ENCODE measurements at regions of chr4 and their contacts with region 1.

Region 1: DNA sequence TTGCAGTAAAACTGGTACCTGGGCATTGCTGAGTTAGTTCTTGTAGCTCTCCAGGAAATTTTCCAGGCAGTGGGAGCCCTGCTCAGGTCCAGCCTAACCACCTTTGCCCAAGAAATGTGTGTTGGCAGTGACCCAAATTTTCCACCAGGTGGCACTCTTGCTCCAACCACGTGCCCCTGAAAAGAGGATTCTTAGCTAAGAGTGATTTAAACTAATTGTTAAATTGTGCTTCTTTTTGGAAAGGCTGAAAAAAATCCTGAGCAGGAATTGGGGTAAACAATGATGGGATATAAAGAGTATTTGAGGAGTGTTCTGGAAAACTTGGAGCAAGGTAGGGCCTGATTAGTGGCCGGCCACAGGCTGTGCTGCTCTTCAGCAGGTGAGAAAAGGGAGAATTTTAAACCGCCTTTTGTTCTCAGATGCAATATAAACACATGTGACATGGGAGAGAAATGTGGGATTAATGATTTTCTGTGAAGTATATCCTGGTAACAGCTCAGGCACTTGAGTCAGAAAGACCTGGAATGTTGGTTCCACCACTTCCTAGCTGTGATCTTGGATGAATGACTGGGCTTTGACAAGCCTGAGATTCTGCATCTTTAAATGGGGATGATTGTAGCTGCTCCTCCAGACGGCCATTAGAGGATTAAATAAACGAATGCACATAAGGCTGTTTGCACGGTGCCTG is 219.6 kb downstream of the PTTG2 start:
- DNase-seq: no peak
- ATAC-seq: peak; percentile 83
- H3K4me3 ChIP-seq: no peak overlapping the region
- H3K27ac ChIP-seq: 0 out of 2 replicates have a peak overlapping the region, but pooled peaks have one; percentile 6
- H3K4me1 ChIP-seq: peaks cover 15 to 18% of the 10 kb centered on the region in 2 experiments
- H3K27me3 ChIP-seq: no peaks in the 10 kb centered on the region
- CTCF ChIP-seq: peak; percentile 86 to 99 (median 96)
- POLR2A ChIP-seq: no peak
- RAD21 ChIP-seq: peak; percentile 99

Region 2: DNA sequence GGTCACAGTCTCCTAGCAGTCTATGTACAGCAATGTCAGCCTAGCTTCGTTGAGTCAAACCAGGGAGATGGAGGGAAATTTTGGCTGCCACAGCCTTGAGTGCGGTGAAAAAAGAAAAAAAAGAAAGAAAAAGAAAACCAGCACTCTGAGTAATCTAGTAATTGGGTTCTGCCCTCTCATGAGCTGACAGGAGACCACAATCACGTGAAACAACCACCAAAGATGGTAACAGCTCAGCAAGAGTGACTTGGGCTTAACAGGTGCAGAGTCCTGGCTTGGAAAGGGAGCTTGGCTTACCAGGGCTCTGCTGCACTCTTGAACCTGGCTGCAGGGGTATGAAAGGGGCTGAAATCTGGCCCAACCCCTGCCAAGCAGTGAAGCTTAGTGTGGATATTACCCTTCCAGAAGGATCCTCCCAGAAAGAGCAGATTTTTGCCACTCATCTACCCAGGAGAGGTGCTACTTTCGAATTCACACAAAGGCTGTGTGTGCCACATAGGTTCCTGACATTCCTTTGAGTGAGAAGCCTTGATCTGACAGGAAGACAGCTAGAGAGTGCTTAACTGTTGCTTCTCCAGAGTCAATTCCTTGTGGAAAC is 130.7 kb after region 1 on chr4:
- CTCF ChIA-PET with region 1: interaction called, 10 read pairs
- POLR2A ChIA-PET with region 1: no interaction called
- RAD21 ChIA-PET with region 1: interaction called in 1 of 2 experiments, 3 read pairs
- intact Hi-C with region 1: no loop called
- DNase-seq: no peak
- ATAC-seq: no peak
- H3K4me3 ChIP-seq: no peak overlapping the region
- H3K27ac ChIP-seq: no peak overlapping the region
- H3K4me1 ChIP-seq: peaks cover 17 to 32% of the 10 kb centered on the region in 2 experiments
- H3K27me3 ChIP-seq: no peaks in the 10 kb centered on the region
- CTCF ChIP-seq: no peak
- POLR2A ChIP-seq: no peak
- RAD21 ChIP-seq: no peak

Region 3: GRCh38 chr4:38675146-38676121 is 495.6 kb after region 1 on chr4:
- CTCF ChIA-PET with region 1: interaction called, 92 read pairs
- POLR2A ChIA-PET with region 1: interaction called, 6 read pairs
- RAD21 ChIA-PET with region 1: interaction called in 1 of 2 experiments, 7 read pairs
- intact Hi-C with region 1: loop called (anchors 1 kb)
- DNase-seq: peak; percentile 60
- ATAC-seq: peak; percentile 58
- H3K4me3 ChIP-seq: 0 out of 4 replicates have a peak overlapping the region, but pooled peaks of 1 of the 2 experiments have one; percentile 32
- H3K27ac ChIP-seq: peak overlapping the region; percentile 88
- H3K4me1 ChIP-seq: peaks cover 54 to 56% of the 10 kb centered on the region in 2 experiments
- H3K27me3 ChIP-seq: no peaks in the 10 kb centered on the region
- CTCF ChIP-seq: peak in 2 of 3 experiments; percentile 82 to 94; a peak in 4 of 6 replicates
- POLR2A ChIP-seq: no peak
- RAD21 ChIP-seq: no peak

Region 4: DNA sequence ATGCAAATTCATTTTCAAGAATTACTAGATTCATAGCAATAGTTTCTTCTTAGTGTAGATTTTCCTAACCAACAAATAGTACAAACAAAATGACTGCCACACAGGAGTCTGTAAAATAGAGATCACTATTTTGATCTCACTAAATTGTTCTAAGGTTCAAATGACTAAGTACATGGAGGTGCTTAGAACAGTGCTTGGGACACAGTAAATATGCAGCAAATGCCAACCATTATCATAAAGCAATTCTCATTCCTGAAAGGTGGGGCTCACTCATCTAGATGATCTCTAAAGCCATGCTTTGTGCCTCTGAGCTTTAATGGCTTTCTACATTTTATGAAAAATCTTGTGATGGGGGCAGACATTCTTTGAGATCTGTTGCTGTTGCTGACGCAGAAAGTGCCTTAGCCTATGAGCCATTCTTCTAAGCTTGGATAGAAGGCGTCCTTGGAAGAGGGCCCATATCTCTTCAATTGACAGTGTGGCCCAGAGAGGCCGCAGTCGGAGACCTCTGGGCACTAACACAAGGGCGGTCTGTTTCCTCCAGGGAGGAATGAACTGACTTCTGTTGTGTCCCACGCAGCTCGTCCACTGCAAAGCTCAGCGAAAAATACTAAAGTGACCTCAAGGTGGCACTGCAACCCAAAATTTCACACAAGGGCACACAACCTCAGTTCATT is 579.4 kb after region 1 on chr4:
- CTCF ChIA-PET with region 1: interaction called, 13 read pairs
- POLR2A ChIA-PET with region 1: interaction called, 3 read pairs
- RAD21 ChIA-PET with region 1: interaction called, 3 to 5 read pairs
- intact Hi-C with region 1: no loop called
- DNase-seq: no peak
- ATAC-seq: peak; percentile 84
- H3K4me3 ChIP-seq: no peak overlapping the region
- H3K27ac ChIP-seq: no peak overlapping the region
- H3K4me1 ChIP-seq: peaks cover 0 to 8% of the 10 kb centered on the region in 2 experiments; a peak in 1 of 4 replicates
- H3K27me3 ChIP-seq: no peaks in the 10 kb centered on the region
- CTCF ChIP-seq: peak; percentile 54 to 84 (median 72)
- POLR2A ChIP-seq: no peak
- RAD21 ChIP-seq: peak; percentile 83